ENCODE measurements at regions of chr14 and their contacts with region 1.

Region 1: DNA sequence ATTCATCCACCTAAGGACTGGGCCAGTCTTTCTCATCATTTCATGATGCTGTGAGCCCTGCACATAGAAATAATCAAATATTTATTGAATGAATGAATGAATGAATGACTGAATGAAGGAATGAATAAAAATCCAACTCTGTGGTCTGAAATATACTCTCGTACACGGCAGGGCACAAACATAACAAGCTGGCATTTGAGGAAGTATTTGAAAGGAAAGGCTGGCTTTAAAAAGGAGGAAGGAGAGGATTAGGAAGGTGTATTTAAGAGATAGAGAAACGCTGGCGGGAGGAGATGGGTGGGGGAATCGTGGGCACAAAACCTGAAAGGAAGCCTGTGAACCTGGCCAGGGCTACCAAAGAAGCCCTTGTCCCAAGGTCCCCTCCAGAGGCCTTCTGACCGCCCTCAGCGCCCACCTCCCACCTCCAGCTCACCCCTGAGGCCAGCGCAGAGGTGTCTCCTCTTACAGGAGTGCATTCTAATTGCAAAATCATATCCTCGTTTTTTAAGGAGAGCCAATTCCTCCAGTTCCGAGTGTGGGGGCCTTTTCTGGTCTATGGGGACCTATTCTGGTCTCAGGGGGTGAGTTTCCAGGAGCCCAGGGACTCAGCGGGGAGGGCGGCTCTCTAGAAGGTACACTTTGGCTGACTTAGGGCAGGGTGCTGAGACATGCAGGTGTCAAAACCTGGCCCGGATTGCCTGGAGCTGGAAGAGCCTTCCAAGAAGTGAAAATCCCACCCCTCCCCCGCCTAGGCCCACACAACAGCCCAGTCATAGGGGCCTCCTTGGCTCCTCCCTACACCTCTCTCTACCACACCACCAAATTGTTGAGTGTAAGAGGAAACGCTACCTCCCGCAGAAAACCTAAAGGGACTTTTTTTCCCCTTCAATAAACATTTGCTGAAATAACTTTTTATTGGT is 8.7 kb upstream of the JDP2 start:
- DNase-seq: peak; percentile 56
- H3K4me3 Mint-ChIP-seq: peak overlapping the region; percentile 56
- H3K27ac Mint-ChIP-seq: peak overlapping the region; percentile 68
- H3K4me1 Mint-ChIP-seq: peaks cover 31% of the 10 kb centered on the region
- H3K27me3 Mint-ChIP-seq: peaks cover under 1% of the 10 kb centered on the region

Region 2: GRCh38 chr14:75365116-75365515 is 54.0 kb before region 1 on chr14:
- intact Hi-C with region 1: loop called (anchors 1 kb)
- DNase-seq: no peak
- H3K4me3 Mint-ChIP-seq: no peak overlapping the region
- H3K27ac Mint-ChIP-seq: no peak overlapping the region
- H3K4me1 Mint-ChIP-seq: peaks cover 17% of the 10 kb centered on the region
- H3K27me3 Mint-ChIP-seq: peaks cover 13% of the 10 kb centered on the region

Region 3: GRCh38 chr14:75469606-75470237 is 50.6 kb after region 1 on chr14:
- intact Hi-C with region 1: loop called (anchors 1 kb)
- DNase-seq: no peak
- H3K4me3 Mint-ChIP-seq: no peak overlapping the region
- H3K27ac Mint-ChIP-seq: no peak overlapping the region
- H3K4me1 Mint-ChIP-seq: peaks cover 12% of the 10 kb centered on the region
- H3K27me3 Mint-ChIP-seq: no peaks in the 10 kb centered on the region

Region 4: DNA sequence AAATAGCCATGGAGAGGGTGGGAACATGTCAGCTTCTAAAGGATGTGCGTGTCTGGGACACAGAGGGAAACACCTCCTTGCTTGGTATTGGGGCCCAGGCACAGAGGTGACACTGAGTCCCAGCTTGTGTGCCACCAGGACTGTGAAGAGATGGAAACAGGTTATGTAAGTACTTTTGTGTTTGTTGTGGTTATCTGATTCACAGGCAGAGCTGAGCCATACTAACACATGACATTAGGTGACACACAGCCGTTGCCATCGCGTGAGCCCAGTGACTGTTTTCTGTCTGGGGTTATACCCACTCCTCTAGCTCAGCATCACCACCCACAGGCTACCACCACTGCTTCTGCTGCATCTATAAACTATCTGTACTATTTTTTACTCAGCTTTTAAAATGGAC is 147.2 kb after region 1 on chr14:
- intact Hi-C with region 1: loop called (anchors 2 kb)
- DNase-seq: peak; percentile 68
- H3K4me3 Mint-ChIP-seq: peak overlapping the region; percentile 66
- H3K27ac Mint-ChIP-seq: peak overlapping the region; percentile 87
- H3K4me1 Mint-ChIP-seq: peaks cover 76% of the 10 kb centered on the region
- H3K27me3 Mint-ChIP-seq: no peaks in the 10 kb centered on the region